ENCODE measurements at regions of chr13 and their contacts with region 1.

Region 1: DNA sequence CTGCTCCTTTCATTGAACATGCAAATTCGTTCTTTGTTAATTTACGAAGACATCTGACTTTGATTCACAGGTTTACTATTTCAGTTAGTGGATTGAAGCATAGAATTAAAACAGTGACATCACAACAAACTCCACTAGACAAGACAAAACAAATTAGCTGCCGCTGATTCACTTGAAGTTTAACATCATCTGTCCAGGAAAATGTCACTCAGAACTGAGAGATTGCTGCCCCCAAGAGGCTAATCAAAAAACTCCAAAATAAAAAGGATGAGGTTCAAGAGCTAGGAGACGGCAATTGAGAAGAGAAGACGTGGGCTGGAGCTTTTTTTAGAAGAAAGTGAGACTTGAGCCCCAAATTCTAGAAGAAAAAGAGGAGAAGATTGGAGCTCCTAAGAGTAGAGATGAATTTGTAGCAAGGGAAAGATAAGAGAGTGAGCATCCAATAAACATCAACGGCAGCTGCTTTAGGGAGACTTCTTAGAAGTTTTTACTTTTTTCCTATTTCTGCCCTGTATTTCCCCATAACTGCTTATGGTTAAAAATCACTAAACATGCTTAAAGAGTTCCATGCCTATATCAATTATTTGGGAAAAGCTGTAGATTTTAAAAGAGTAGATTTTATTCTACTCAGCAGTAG is 40.8 kb upstream of the TPP2 start:
- DNase-seq: peak; percentile 21
- ATAC-seq: peak; percentile 83
- H3K4me3 ChIP-seq: no peak overlapping the region
- H3K27ac ChIP-seq: no peak overlapping the region
- H3K4me1 ChIP-seq: no peaks in the 10 kb centered on the region
- H3K27me3 ChIP-seq: peaks cover 5% of the 10 kb centered on the region; the same call in 1 of the 2 replicates
- CTCF ChIP-seq: peak; percentile 29 to 65 (median 34); a peak in 4 of 6 replicates
- POLR2A ChIP-seq: no peak
- RAD21 ChIP-seq: peak; percentile 61

Region 2: DNA sequence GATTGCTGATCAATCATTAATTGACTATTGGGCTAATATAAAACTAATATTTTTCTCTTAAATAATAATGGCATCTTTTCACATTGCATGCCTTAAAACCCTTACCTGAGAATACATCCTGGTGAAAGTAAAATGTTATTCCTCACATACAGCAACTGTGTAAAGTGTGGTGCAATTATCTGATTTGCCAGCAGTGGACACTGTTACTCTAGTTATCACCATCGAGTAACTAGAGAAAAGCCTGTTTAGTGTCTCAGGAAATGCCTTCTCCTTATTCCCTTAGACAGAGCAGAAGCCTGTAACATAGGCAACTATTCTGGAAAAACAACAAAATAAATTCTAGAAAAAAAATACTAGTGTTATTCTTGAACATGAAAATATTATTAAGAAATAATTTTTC is 614.0 kb before region 1 on chr13:
- CTCF ChIA-PET with region 1: interaction called, 10 read pairs
- POLR2A ChIA-PET with region 1: no interaction called
- RAD21 ChIA-PET with region 1: no interaction called
- intact Hi-C with region 1: no loop called
- DNase-seq: no peak
- ATAC-seq: no peak; the same call in 1 of the 2 replicates
- H3K4me3 ChIP-seq: no peak overlapping the region
- H3K27ac ChIP-seq: no peak overlapping the region
- H3K4me1 ChIP-seq: no peaks in the 10 kb centered on the region
- H3K27me3 ChIP-seq: no peaks in the 10 kb centered on the region
- CTCF ChIP-seq: peak in 2 of 3 experiments; percentile 31 to 44; a peak in 2 of 6 replicates
- POLR2A ChIP-seq: no peak
- RAD21 ChIP-seq: peak; percentile 31

Region 3: GRCh38 chr13:102141625-102142472 is 414.2 kb before region 1 on chr13:
- CTCF ChIA-PET with region 1: interaction called, 20 read pairs
- POLR2A ChIA-PET with region 1: interaction called, 3 read pairs
- RAD21 ChIA-PET with region 1: no interaction called
- intact Hi-C with region 1: loop called (anchors 5 kb)
- DNase-seq: no peak
- ATAC-seq: no peak
- H3K4me3 ChIP-seq: no peak overlapping the region
- H3K27ac ChIP-seq: no peak overlapping the region
- H3K4me1 ChIP-seq: no peaks in the 10 kb centered on the region
- H3K27me3 ChIP-seq: no peaks in the 10 kb centered on the region
- CTCF ChIP-seq: peak in 2 of 3 experiments; percentile 52 to 65; a peak in 4 of 6 replicates
- POLR2A ChIP-seq: no peak
- RAD21 ChIP-seq: peak; percentile 18; the same call in 1 of the 2 replicates